Activated naive CD4-positive, alpha-beta T cell treated with anti-CD3 and anti-CD28 coated beads, Interleukin-2, amount 10 ng/mL, durations not matched to agents 7 days and 5 days (primary cell): ENCODE measurements at regions of chr6 and their contacts with region 1.

Region 1: DNA sequence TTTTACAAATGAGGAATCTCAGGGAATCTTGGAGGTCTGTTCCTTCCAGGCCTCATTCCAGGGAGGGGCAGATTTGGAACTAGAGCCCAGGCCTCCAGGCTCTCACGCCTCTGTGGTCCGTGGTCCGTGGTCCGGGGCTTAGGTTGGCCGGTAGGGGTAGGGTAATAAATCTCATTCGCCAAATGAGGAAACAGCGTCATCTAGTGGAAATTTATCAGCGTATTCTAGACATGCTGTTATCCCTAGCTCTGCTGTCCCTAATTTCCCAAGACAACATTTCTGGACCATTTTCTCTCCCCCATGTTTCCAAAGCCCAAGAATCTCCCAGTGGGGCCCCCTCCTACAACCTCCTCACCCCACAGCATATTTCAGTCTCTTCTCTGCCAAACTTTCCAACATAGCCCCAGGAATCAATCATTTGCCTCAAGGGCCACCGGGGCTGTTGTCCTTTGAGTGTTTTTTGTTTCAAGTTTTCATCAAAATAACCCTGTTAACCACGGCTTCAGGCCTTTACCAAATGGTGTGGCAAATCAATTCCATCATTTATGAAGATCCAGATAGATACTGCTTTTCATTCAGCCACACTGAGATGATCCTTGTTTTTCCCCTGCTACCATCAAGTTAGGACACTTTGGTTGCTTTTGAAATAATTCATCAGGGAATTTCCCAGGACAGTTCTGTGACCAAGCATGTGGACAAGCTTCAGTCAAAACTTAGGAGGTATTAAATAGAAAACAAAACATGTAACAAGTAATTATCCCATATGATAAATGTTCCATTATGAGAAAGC is 126.8 kb downstream of the ALDH8A1 start:
- DNase-seq: peak; percentile 43
- H3K4me3 Mint-ChIP-seq: no peak overlapping the region
- H3K27ac Mint-ChIP-seq: no peak overlapping the region
- H3K4me1 Mint-ChIP-seq: no peaks in the 10 kb centered on the region
- H3K27me3 Mint-ChIP-seq: peaks cover 8% of the 10 kb centered on the region

Region 2: GRCh38 chr6:134111062-134111677 is 711.9 kb before region 1 on chr6:
- CTCF ChIA-PET with region 1: interaction called, 11 read pairs
- DNase-seq: peak; percentile 60
- H3K4me3 Mint-ChIP-seq: no peak overlapping the region
- H3K27ac Mint-ChIP-seq: no peak overlapping the region
- H3K4me1 Mint-ChIP-seq: peaks cover 4% of the 10 kb centered on the region
- H3K27me3 Mint-ChIP-seq: peaks cover 39% of the 10 kb centered on the region

Region 3: GRCh38 chr6:134123666-134124208 is 699.4 kb before region 1 on chr6:
- CTCF ChIA-PET with region 1: interaction called, 20 read pairs
- DNase-seq: no peak
- H3K4me3 Mint-ChIP-seq: no peak overlapping the region
- H3K27ac Mint-ChIP-seq: no peak overlapping the region
- H3K4me1 Mint-ChIP-seq: no peaks in the 10 kb centered on the region
- H3K27me3 Mint-ChIP-seq: peaks cover 5% of the 10 kb centered on the region

Region 4: DNA sequence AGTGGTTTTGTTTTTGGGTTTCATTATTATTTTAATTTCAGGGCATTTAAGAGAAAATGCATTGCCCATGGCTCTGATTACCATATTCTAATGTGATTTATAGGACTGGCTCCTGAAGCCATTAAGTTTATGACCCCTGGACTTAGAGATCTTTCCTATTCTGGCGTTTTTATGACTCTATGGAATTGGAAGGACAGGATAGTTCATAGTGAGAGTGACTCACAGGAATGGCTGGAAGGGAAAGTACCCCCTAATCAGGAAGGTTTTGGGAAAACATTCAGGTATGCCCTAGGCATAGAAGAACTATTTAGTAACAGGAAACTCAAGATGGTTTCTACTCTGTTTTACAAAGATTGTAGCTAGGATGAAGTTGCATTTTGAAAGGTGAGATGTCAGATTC is 662.1 kb before region 1 on chr6:
- CTCF ChIA-PET with region 1: interaction called, 16 read pairs
- DNase-seq: no peak
- H3K4me3 Mint-ChIP-seq: no peak overlapping the region
- H3K27ac Mint-ChIP-seq: no peak overlapping the region
- H3K4me1 Mint-ChIP-seq: no peaks in the 10 kb centered on the region
- H3K27me3 Mint-ChIP-seq: no peaks in the 10 kb centered on the region

Region 5: DNA sequence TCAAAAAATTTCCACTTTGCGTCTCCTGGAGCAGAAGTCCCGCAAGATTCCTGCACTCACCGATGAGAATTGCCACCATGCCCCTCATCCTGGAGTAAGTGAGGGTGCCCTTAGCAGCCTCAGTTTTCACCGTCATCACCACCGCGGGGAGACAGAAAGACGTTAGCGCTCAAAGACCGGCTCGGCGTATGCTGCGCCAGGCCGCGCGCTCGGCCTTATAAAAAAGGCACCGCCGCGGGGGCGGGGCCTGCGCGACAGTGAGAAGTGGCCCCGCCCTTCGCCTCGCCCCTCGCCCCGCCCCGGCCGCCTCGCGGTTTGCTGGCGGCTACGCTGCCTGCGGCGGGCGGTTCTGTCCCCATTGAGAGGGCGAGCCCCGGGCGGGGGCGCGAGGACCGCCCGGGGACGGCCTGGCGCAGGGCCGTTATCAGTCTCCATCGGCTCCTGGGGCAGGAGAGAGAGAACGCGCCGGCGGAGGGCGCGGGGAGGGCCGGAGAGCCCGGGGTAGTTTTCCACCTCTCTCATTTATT is 648.4 kb before region 1 on chr6:
- CTCF ChIA-PET with region 1: interaction called, 16 read pairs
- DNase-seq: peak; percentile 93
- H3K4me3 Mint-ChIP-seq: peak overlapping the region; percentile 99
- H3K27ac Mint-ChIP-seq: peak overlapping the region; percentile 98
- H3K4me1 Mint-ChIP-seq: peaks cover 79% of the 10 kb centered on the region
- H3K27me3 Mint-ChIP-seq: peaks cover 3% of the 10 kb centered on the region

Region 6: GRCh38 chr6:134640975-134641429 is 182.1 kb before region 1 on chr6:
- CTCF ChIA-PET with region 1: interaction called, 12 read pairs
- DNase-seq: peak; percentile 83
- H3K4me3 Mint-ChIP-seq: no peak overlapping the region
- H3K27ac Mint-ChIP-seq: no peak overlapping the region
- H3K4me1 Mint-ChIP-seq: peaks cover 19% of the 10 kb centered on the region
- H3K27me3 Mint-ChIP-seq: peaks cover 11% of the 10 kb centered on the region

Region 7: DNA sequence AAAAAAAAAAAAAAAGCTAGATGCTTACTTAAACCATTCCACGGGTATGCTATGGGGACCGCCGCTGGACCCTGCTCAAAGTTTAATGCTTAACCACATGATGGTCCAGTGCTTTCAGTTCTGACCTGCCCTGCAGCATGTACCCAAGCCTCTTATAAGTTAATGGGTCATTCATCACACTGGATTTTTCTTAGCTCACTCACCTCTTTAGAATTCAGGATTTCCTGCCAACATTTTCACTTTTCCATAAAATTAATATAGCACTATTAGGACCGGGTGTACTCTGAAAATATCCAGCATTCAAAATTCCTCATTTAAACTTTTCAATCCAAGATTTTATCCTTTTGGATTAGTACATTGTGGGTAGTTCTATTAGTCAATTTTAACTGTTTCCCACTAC is 14.0 kb before region 1 on chr6:
- CTCF ChIA-PET with region 1: no interaction called
- DNase-seq: no peak
- H3K4me3 Mint-ChIP-seq: no peak overlapping the region
- H3K27ac Mint-ChIP-seq: no peak overlapping the region
- H3K4me1 Mint-ChIP-seq: no peaks in the 10 kb centered on the region
- H3K27me3 Mint-ChIP-seq: peaks cover 7% of the 10 kb centered on the region